Caco-2 (cell line): ENCODE measurements at regions of chr7 and their contacts with region 1.

Region 1: GRCh38 chr7:35037526-35038339 is 448 bp upstream of the DPY19L1 start:
- DNase-seq: peak; percentile 92 to 97
- H3K4me3 ChIP-seq: peak overlapping the region; percentile 64
- H3K4me3 Mint-ChIP-seq: peak overlapping the region; percentile 96
- H3K27ac Mint-ChIP-seq: peak overlapping the region; percentile 38
- H3K4me1 ChIP-seq: 0 out of 2 replicates have a peak, but pooled peaks cover 17% of the 10 kb centered on the region
- H3K4me1 Mint-ChIP-seq: peaks cover 7% of the 10 kb centered on the region
- H3K27me3 ChIP-seq: no peaks in the 10 kb centered on the region
- H3K27me3 Mint-ChIP-seq: peaks cover 15% of the 10 kb centered on the region
- CTCF ChIP-seq: peak; percentile 74

Region 2: GRCh38 chr7:34675749-34676374 is 361.9 kb before region 1 on chr7:
- CTCF ChIA-PET with region 1: no interaction called
- POLR2A ChIA-PET with region 1: no interaction called
- intact Hi-C with region 1: loop called (anchors 5 kb)
- DNase-seq: peak in 1 of 2 experiments; percentile 35
- H3K4me3 ChIP-seq: no peak overlapping the region
- H3K4me3 Mint-ChIP-seq: no peak overlapping the region
- H3K27ac Mint-ChIP-seq: no peak overlapping the region
- H3K4me1 ChIP-seq: no peaks in the 10 kb centered on the region
- H3K4me1 Mint-ChIP-seq: peaks cover 6% of the 10 kb centered on the region
- H3K27me3 ChIP-seq: no peaks in the 10 kb centered on the region
- H3K27me3 Mint-ChIP-seq: no peaks in the 10 kb centered on the region
- CTCF ChIP-seq: peak; percentile 47 to 81

Region 3: GRCh38 chr7:34759452-34760125 is 278.1 kb before region 1 on chr7:
- CTCF ChIA-PET with region 1: interaction called, 3 read pairs
- POLR2A ChIA-PET with region 1: no interaction called
- intact Hi-C with region 1: loop called (anchors 10 kb)
- DNase-seq: peak in 1 of 2 experiments; percentile 24
- H3K4me3 ChIP-seq: no peak overlapping the region
- H3K4me3 Mint-ChIP-seq: no peak overlapping the region
- H3K27ac Mint-ChIP-seq: no peak overlapping the region
- H3K4me1 ChIP-seq: no peaks in the 10 kb centered on the region; the same call in 1 of the 2 replicates
- H3K4me1 Mint-ChIP-seq: peaks cover 11% of the 10 kb centered on the region
- H3K27me3 ChIP-seq: no peaks in the 10 kb centered on the region
- H3K27me3 Mint-ChIP-seq: no peaks in the 10 kb centered on the region
- CTCF ChIP-seq: peak; percentile 36 to 49

Region 4: DNA sequence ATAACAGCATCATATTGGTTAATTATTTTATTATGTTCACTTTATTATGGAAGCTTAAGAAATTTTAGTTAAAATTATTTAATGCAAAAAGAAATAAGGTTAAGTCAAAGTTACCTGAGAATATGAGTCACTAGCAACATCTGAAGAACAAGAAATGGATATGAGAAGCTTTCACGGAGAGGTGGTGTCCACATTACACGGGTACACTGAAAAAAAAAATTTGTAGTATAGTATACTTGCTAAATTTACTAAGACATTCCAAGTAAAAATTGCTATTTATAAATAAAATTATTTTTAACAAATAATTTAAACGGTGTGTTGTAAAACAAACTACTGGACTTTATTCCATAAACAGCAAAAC is 64.4 kb before region 1 on chr7:
- CTCF ChIA-PET with region 1: no interaction called
- POLR2A ChIA-PET with region 1: no interaction called
- intact Hi-C with region 1: no loop called
- DNase-seq: no peak
- H3K4me3 ChIP-seq: no peak overlapping the region
- H3K4me3 Mint-ChIP-seq: no peak overlapping the region
- H3K27ac Mint-ChIP-seq: no peak overlapping the region
- H3K4me1 ChIP-seq: no peaks in the 10 kb centered on the region
- H3K4me1 Mint-ChIP-seq: no peaks in the 10 kb centered on the region
- H3K27me3 ChIP-seq: no peaks in the 10 kb centered on the region
- H3K27me3 Mint-ChIP-seq: no peaks in the 10 kb centered on the region
- CTCF ChIP-seq: no peak